ENCODE measurements at regions of chr20 and their contacts with region 1.

Region 1: GRCh38 chr20:44754542-44754941 is 8.9 kb downstream of the KCNK15 start:
- DNase-seq: no peak
- ATAC-seq: no peak
- H3K4me3 ChIP-seq: no peak overlapping the region
- H3K27ac ChIP-seq: no peak overlapping the region
- H3K4me1 ChIP-seq: no peaks in the 10 kb centered on the region
- H3K27me3 ChIP-seq: peaks cover 54% of the 10 kb centered on the region
- CTCF ChIP-seq: no peak
- POLR2A ChIP-seq: no peak
- RAD21 ChIP-seq: no peak

Region 2: GRCh38 chr20:44666066-44666465 is 88.5 kb before region 1 on chr20:
- CTCF ChIA-PET with region 1: no interaction called
- POLR2A ChIA-PET with region 1: interaction called, 16 read pairs
- dilution Hi-C with region 1: no loop called
- in situ Hi-C with region 1: no loop called
- intact Hi-C with region 1: no loop called
- DNase-seq: no peak
- ATAC-seq: no peak
- H3K4me3 ChIP-seq: no peak overlapping the region
- H3K27ac ChIP-seq: no peak overlapping the region
- H3K4me1 ChIP-seq: no peaks in the 10 kb centered on the region
- H3K27me3 ChIP-seq: peaks cover 23% of the 10 kb centered on the region
- CTCF ChIP-seq: no peak
- POLR2A ChIP-seq: no peak
- RAD21 ChIP-seq: no peak